ENCODE measurements at regions of chr20 and their contacts with region 1.

Region 1: DNA sequence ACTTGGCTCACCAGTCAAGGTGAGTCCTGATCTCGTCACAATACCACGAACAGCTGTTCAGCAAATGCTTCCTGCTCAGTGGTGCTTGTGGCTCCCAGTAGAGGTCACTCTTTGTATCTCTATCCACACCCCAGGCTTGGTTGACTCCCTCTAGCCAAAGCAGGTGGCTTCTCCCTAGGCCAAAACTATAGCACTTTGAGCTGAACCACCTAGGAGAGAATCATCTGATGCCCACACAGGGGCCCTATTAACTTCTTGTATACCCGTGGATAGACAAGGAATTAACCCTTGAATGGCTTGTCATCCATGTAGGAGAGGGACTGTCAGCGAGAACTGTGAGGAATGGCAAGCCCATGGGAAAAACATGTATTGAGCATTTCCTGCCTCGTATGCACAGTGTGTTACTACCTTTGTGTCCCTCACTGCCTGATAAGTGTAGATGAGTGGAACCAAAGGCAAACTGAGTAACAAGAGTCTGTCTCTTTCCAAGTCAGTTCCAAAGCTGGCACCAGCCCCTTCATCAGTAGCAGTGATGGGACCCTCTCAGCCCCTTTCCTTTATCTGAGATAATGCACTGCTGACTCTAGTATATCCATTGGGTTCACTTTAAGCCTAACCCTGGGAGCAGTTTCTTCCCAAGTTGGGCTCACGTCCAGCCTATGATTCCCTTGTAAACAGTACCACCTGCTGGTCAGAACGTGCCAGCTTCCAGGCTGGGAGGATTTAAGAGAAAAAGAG is 42.5 kb downstream of the EIF2S2 start:
- DNase-seq: peak; percentile 14 to 76 (median 59)
- ATAC-seq: peak; percentile 89
- H3K4me3 ChIP-seq: no peak overlapping the region
- H3K4me3 Mint-ChIP-seq: no peak overlapping the region
- H3K27ac ChIP-seq: peak overlapping the region in 1 of 2 experiments; percentile 14
- H3K27ac Mint-ChIP-seq: peak overlapping the region; percentile 33
- H3K4me1 ChIP-seq: peaks cover 12% of the 10 kb centered on the region
- H3K4me1 Mint-ChIP-seq: peaks cover 40% of the 10 kb centered on the region
- H3K27me3 ChIP-seq: no peaks in the 10 kb centered on the region
- H3K27me3 Mint-ChIP-seq: no peaks in the 10 kb centered on the region
- CTCF ChIP-seq: peak; percentile 72

Region 2: GRCh38 chr20:33862709-33863403 is 206.7 kb before region 1 on chr20:
- CTCF ChIA-PET with region 1: interaction called, 6 read pairs
- POLR2A ChIA-PET with region 1: no interaction called
- intact Hi-C with region 1: loop called (anchors 1 kb)
- DNase-seq: peak in 8 of 9 experiments; percentile 25 to 63 (median 54)
- ATAC-seq: peak; percentile 54
- H3K4me3 ChIP-seq: no peak overlapping the region
- H3K4me3 Mint-ChIP-seq: no peak overlapping the region
- H3K27ac ChIP-seq: no peak overlapping the region
- H3K27ac Mint-ChIP-seq: no peak overlapping the region
- H3K4me1 ChIP-seq: peaks cover 28% of the 10 kb centered on the region
- H3K4me1 Mint-ChIP-seq: peaks cover 23% of the 10 kb centered on the region
- H3K27me3 ChIP-seq: no peaks in the 10 kb centered on the region
- H3K27me3 Mint-ChIP-seq: no peaks in the 10 kb centered on the region
- CTCF ChIP-seq: peak; percentile 70

Region 3: GRCh38 chr20:33933469-33933909 is 136.0 kb before region 1 on chr20:
- CTCF ChIA-PET with region 1: interaction called, 15 read pairs
- POLR2A ChIA-PET with region 1: interaction called, 3 read pairs
- intact Hi-C with region 1: loop called (anchors 1 kb)
- DNase-seq: peak; percentile 6 to 71 (median 43)
- ATAC-seq: peak; percentile 62
- H3K4me3 ChIP-seq: no peak overlapping the region
- H3K4me3 Mint-ChIP-seq: no peak overlapping the region
- H3K27ac ChIP-seq: no peak overlapping the region
- H3K27ac Mint-ChIP-seq: no peak overlapping the region
- H3K4me1 ChIP-seq: no peaks in the 10 kb centered on the region
- H3K4me1 Mint-ChIP-seq: no peaks in the 10 kb centered on the region
- H3K27me3 ChIP-seq: no peaks in the 10 kb centered on the region
- H3K27me3 Mint-ChIP-seq: no peaks in the 10 kb centered on the region
- CTCF ChIP-seq: no peak

Region 4: GRCh38 chr20:33999025-33999649 is 70.4 kb before region 1 on chr20:
- CTCF ChIA-PET with region 1: interaction called, 3 read pairs
- POLR2A ChIA-PET with region 1: no interaction called
- intact Hi-C with region 1: loop called in 1 of 2 experiments (anchors 2 kb)
- DNase-seq: no peak
- ATAC-seq: no peak
- H3K4me3 ChIP-seq: no peak overlapping the region
- H3K4me3 Mint-ChIP-seq: peak overlapping the region; percentile 3
- H3K27ac ChIP-seq: no peak overlapping the region
- H3K27ac Mint-ChIP-seq: no peak overlapping the region
- H3K4me1 ChIP-seq: peaks cover 75% of the 10 kb centered on the region
- H3K4me1 Mint-ChIP-seq: peaks cover 88% of the 10 kb centered on the region
- H3K27me3 ChIP-seq: no peaks in the 10 kb centered on the region
- H3K27me3 Mint-ChIP-seq: no peaks in the 10 kb centered on the region
- CTCF ChIP-seq: no peak

Region 5: GRCh38 chr20:34058831-34059230 is 10.7 kb before region 1 on chr20:
- CTCF ChIA-PET with region 1: interaction called, 11 read pairs
- POLR2A ChIA-PET with region 1: interaction called, 4 read pairs
- intact Hi-C with region 1: no loop called
- DNase-seq: peak in 5 of 9 experiments; percentile 15 to 81 (median 49)
- ATAC-seq: peak; percentile 89
- H3K4me3 ChIP-seq: no peak overlapping the region
- H3K4me3 Mint-ChIP-seq: no peak overlapping the region
- H3K27ac ChIP-seq: no peak overlapping the region
- H3K27ac Mint-ChIP-seq: peak overlapping the region; percentile 28
- H3K4me1 ChIP-seq: peaks cover 48% of the 10 kb centered on the region
- H3K4me1 Mint-ChIP-seq: peaks cover 90% of the 10 kb centered on the region
- H3K27me3 ChIP-seq: no peaks in the 10 kb centered on the region
- H3K27me3 Mint-ChIP-seq: no peaks in the 10 kb centered on the region
- CTCF ChIP-seq: no peak

Region 6: GRCh38 chr20:34180460-34181120 is 111.1 kb after region 1 on chr20:
- CTCF ChIA-PET with region 1: no interaction called
- POLR2A ChIA-PET with region 1: no interaction called
- intact Hi-C with region 1: no loop called
- DNase-seq: no peak
- ATAC-seq: no peak
- H3K4me3 ChIP-seq: no peak overlapping the region
- H3K4me3 Mint-ChIP-seq: no peak overlapping the region
- H3K27ac ChIP-seq: no peak overlapping the region
- H3K27ac Mint-ChIP-seq: no peak overlapping the region
- H3K4me1 ChIP-seq: no peaks in the 10 kb centered on the region
- H3K4me1 Mint-ChIP-seq: no peaks in the 10 kb centered on the region
- H3K27me3 ChIP-seq: no peaks in the 10 kb centered on the region
- H3K27me3 Mint-ChIP-seq: peaks cover 11% of the 10 kb centered on the region
- CTCF ChIP-seq: no peak

Measured in CD8-positive, alpha-beta T cell (primary cell).